Activated T-helper 2 cell treated with anti-CD3 and anti-CD28 coated beads, Interferon-gamma antibody, Interleukin-2, Interleukin-4, amounts not matched to agents 10 μg/mL and 5 μg/mL and 100 μg/mL, durations not matched to agents 14 hours and 24 hours and 36 hours (primary cell): ENCODE measurements at regions of chr22 and their contacts with region 1.

Region 1: DNA sequence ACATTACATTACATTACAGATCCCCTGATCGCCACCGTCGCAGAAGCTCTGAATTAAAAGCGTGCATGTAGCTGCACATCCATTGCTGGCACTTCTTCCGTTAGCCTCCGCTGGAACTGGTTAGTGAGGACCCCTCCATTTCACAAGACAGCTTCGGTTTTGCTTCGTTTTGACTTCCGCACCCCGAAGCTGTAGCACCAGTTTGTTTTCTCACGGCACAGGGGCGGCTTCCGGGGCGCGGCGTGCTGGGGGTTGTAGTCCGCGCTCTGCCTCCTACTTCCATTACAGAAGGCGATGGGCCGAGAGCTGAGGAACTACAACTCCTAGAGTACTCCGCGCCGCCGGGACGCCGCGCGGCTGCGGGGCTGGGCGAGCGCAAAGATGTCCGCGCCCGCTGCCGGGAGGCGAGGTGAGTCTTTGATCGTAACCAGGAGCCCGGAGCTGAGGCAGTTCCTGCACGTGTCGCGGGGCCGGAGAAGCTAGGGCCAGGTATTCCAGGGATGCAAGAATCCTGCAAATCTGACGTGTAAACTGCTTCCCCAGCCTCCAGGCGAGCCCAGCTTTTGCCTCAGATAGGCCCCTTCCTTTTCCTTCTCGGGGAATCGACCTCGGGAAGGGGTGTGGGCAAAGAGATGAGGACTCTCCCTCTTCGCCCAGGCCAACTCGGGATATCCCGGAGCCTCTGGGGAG is at the start of gene PEX26:
- DNase-seq: peak; percentile 95
- H3K4me3 Mint-ChIP-seq: peak within 1 kb of the TSS; percentile 93
- H3K27ac Mint-ChIP-seq: peak within 1 kb of the TSS; percentile 96
- H3K4me1 Mint-ChIP-seq: peaks cover 42% of the 10 kb centered on the region
- H3K27me3 Mint-ChIP-seq: no peaks in the 10 kb centered on the region
- total RNA-seq, gene PEX26: 47.3 and 47.8 TPM in 2 replicates

Region 2: DNA sequence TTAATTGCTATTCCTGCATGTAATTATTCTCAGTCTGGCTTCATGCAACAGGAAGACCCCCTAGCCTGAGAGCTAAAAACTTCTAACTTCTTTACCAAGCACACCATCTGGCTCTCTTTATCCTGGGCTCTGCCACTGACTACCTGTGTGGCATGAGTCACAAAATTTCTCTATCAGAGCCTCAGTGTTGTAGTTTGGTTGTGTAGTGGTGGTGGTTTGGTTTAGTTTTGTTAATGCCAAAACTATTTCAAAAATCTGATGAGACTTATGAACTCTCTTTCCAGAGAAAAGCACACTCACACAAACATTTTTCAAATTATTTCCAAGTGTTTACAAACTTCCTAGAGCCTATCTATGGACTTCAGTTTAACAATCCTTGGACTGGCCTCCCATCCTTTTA is 1000.5 kb before region 1 on chr22:
- intact Hi-C with region 1: loop called (anchors 2 kb)
- DNase-seq: no peak
- H3K4me3 Mint-ChIP-seq: no peak overlapping the region
- H3K27ac Mint-ChIP-seq: no peak overlapping the region
- H3K4me1 Mint-ChIP-seq: peaks cover 20% of the 10 kb centered on the region
- H3K27me3 Mint-ChIP-seq: peaks cover 18% of the 10 kb centered on the region

Region 3: DNA sequence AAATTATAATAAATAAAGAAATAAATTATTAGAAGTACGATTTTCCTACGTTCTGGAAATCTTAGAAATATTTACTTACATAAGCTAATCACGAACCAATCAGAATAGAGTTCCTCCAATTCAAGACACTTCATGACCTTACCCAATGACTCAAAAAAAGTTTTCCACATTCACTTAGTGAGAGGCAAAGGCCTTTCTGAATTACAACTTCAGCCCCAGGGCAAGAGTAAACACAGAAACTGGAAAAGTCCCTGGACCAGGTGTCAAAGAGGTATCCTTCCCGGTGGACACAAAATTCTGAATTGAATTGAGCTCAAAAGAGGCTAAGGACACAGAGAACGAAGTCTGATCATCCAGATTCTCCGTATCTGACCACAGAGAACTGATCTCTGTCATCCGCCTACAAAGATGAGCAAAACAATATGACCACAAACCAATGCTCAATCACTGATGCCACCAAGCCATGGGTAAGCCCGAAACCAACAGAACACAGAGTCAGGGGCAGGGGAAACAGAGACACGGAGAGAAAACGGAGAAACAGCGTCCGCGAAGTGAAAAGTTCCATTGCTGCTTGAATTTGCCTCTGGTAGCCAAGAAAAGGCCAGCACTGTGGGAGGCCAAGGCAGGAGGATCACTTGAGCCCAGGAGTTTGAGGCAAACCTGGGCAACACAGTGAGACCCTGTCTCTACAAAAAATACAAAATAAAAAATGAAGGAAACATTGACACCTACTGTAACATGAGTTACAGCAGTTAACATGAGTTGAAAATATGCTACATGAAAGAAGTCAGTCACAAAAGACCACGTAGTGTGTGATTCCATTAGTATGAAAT is 310.3 kb before region 1 on chr22:
- intact Hi-C with region 1: loop called (anchors 5 kb)
- DNase-seq: peak; percentile 52
- H3K4me3 Mint-ChIP-seq: peak overlapping the region; percentile 2
- H3K27ac Mint-ChIP-seq: peak overlapping the region; percentile 43
- H3K4me1 Mint-ChIP-seq: peaks cover 19% of the 10 kb centered on the region
- H3K27me3 Mint-ChIP-seq: peaks cover 51% of the 10 kb centered on the region

Region 4: GRCh38 chr22:17824457-17824856 is 253.3 kb before region 1 on chr22:
- intact Hi-C with region 1: no loop called
- DNase-seq: no peak
- H3K4me3 Mint-ChIP-seq: no peak overlapping the region
- H3K27ac Mint-ChIP-seq: no peak overlapping the region
- H3K4me1 Mint-ChIP-seq: no peaks in the 10 kb centered on the region
- H3K27me3 Mint-ChIP-seq: no peaks in the 10 kb centered on the region

Region 5: DNA sequence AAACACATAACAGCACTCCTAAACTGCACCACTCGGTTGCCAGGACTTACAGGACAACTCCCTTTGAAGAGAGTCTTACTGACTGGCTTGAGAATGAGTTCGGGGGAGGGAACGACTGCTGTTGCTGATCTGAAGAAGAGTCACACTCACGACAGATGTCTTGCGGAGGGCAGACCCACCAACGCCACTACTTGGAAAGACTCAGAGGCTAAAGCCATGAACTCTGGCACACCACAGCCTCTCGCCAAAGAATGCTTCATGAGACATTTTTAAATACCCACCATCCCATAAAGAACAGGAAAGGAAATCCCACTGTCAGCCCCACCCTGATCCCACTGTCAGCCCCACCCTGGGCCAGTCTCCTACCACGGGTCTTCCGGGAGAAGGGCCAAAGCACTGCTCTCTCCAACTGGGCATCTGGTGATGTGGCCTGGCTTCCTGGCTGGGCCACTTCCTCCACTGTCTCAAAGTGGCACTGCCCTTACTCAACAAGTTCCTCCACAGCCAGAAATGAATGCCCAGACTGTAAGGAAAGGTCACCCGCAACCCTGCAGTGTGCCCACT is 127.1 kb before region 1 on chr22:
- intact Hi-C with region 1: no loop called
- DNase-seq: no peak
- H3K4me3 Mint-ChIP-seq: no peak overlapping the region
- H3K27ac Mint-ChIP-seq: no peak overlapping the region
- H3K4me1 Mint-ChIP-seq: peaks cover 2% of the 10 kb centered on the region
- H3K27me3 Mint-ChIP-seq: no peaks in the 10 kb centered on the region

Region 6: DNA sequence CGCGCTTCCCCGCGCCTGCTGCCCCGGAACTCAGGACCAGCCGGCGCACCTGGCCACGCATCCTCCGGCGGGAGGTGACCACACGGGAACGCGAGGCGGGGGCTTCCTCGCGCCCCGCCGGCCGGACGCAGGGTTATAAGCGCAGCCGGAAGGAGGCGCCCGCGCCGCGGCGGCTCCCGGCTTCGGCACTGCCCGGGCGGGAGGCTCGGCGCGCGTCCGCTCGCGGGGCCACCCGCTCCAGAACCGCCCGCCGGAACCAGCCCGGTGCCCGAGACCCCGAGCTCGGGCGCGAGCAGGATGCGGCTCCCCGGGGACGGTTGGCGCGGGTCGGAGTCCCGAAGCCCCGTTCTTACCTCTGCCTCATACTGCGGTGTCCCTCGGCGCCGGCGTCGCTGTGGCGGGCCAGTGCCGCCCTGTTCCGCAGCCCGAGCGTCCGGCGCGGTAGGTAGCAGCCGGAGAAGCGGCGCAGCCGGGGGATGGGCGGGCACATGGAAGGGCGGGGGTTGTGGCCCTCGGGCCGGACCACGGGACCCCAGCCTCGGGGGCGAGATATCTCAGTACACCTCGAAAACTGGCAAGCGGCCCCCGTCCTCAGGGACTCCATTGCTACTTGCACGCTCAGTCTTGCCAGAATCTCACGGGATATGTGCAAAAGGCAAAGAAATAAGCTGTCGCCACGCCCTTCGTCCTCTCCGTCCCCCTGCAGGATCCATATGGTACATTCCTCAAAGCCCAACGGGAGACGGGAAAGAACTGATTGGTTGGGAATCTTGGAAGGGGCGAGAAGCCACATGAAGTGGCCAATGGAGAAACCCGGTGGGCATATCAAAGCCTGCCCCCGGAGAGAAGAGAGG is 76.5 kb before region 1 on chr22:
- intact Hi-C with region 1: loop called (anchors 2 kb)
- DNase-seq: peak; percentile 69
- H3K4me3 Mint-ChIP-seq: peak overlapping the region; percentile 87
- H3K27ac Mint-ChIP-seq: peak overlapping the region; percentile 88
- H3K4me1 Mint-ChIP-seq: peaks cover 36% of the 10 kb centered on the region
- H3K27me3 Mint-ChIP-seq: peaks cover 15% of the 10 kb centered on the region

Region 7: DNA sequence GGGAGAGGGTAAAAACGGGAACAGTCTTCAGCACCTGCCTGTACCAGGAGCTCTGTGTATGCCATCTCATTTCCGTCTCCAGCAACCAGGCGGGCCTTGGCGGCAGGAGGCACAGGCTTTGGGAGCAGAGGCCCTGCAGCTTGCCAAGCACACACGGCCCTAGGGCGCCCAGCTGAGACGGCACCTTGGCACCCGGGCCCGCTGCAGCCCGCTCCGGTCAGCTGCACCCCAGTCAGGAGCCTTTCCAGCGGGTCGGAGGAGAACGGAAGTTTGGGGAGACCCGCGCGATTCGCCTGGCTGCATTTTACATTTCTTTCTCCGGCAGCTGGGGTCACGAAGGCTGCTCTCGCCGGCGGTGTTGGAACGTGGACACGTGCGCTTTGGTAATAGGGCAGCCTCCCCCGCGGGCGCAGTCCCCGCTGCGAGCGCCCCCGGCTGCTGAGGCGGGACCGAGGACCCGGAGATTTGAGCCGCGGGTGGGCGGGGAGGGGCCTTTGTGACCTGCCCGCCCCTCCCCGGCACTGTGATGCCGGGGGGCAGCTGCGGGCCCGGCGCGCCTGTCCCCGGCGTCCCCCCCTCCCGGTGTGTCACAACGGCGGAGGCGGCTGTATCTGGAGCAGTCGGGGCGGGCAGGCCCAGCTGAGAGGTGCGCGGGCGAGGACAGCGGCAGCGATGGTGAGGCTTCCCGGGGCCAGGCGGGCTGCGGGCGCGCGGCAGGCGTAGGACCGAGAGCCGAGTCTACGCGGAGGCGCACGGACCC is 32.6 kb after region 1 on chr22 and contains the start of gene TUBA8:
- intact Hi-C with region 1: loop called (anchors 5 kb)
- DNase-seq: no peak
- H3K4me3 Mint-ChIP-seq: peak within 1 kb of the TSS; percentile 57
- H3K27ac Mint-ChIP-seq: no peak within 1 kb of the TSS
- H3K4me1 Mint-ChIP-seq: peaks cover 26% of the 10 kb centered on the region
- H3K27me3 Mint-ChIP-seq: peaks cover 32% of the 10 kb centered on the region
- total RNA-seq, gene TUBA8: 1.8 and 2.3 TPM in 2 replicates